Heart left ventricle (tissue), 16 donors: ENCODE measurements at regions of chr1 and their contacts with region 1.

Region 1: DNA sequence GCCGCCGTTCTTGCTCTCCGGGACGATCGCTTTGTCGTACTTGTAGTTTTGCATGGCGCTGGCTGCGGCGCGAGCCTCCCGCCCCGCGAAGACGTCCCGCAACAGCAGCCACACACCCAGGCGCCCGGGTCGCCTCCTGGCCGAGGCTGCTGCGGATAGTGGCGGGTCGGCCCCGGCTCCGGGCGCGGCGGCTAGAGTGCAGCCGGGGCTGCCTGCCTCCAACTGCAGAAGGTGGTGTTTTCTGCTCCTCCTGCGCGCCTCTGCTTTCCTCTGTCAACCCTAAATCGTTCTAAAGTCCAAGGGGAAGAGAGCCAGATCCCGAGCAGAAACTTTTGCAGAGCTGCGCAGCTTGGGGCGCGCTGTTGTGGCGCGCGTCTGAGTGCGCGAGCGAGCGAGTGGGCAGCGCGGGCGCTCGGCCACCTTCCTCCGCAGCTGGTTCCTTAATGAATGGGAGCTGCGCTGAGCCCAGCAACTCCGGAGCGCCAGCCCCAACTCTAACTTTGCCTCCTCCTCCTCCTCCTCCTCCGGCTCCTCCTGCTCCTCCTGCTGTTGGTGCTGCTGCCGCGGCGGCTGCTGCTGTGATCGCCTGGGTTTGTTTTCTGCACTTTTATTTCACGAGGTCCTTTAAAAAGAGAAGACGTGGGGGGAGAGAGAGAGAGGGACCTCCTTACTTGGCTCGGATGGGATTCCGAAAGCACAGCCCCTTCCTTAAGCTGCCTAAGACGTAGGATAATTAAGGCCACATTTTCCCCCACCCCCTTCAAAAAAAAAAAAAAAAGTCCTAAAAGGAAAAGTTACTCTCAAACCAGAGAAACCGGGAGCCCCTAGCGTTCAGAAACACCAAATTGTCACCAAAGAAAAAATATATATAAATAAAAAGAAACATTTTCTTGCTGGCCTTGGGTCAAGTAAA is at the start of gene PLPP3:
- DNase-seq: peak; percentile 87 to 93 (median 91)
- ATAC-seq: peak; percentile 82 to 93 (median 88)
- H3K4me3 ChIP-seq: peak within 1 kb of the TSS; percentile 82 to 99 (median 94)
- H3K27ac ChIP-seq: peak within 1 kb of the TSS; percentile 94 to 99 (median 98)
- H3K4me1 ChIP-seq: peaks cover 0 to 32% (median 11%) of the 10 kb centered on the region in 12 donors
- H3K27me3 ChIP-seq: no peaks in the 10 kb centered on the region
- CTCF ChIP-seq: peak; percentile 27 to 76 (median 52)
- POLR2A ChIP-seq: peak in 1 of 2 donors; percentile 94
- total RNA-seq, gene PLPP3: 75.8 to 221 (median 97.8) TPM

Region 2: GRCh38 chr1:55702064-55702463 is 877.2 kb before region 1 on chr1:
- intact Hi-C with region 1: loop called in 2 of 10 experiments (anchors 5 to 10 kb)
- DNase-seq: no peak
- ATAC-seq: peak in 1 of 4 donors; percentile 51
- H3K4me3 ChIP-seq: no peak overlapping the region
- H3K27ac ChIP-seq: no peak overlapping the region
- H3K4me1 ChIP-seq: peaks cover 0 to 5% (median 0%) of the 10 kb centered on the region in 12 donors
- H3K27me3 ChIP-seq: no peaks in the 10 kb centered on the region
- CTCF ChIP-seq: peak; percentile 35 to 73 (median 60)
- POLR2A ChIP-seq: no peak

Region 3: GRCh38 chr1:56133522-56134472 is 445.4 kb before region 1 on chr1:
- intact Hi-C with region 1: loop called in 1 of 10 experiments (anchors 5 kb)
- DNase-seq: no peak
- ATAC-seq: peak in 1 of 4 donors; percentile 18
- H3K4me3 ChIP-seq: no peak overlapping the region
- H3K27ac ChIP-seq: peak overlapping the region in 1 of 12 donors; percentile 26
- H3K4me1 ChIP-seq: peaks cover 0 to 25% (median 9%) of the 10 kb centered on the region in 12 donors
- H3K27me3 ChIP-seq: no peaks in the 10 kb centered on the region
- CTCF ChIP-seq: no peak
- POLR2A ChIP-seq: no peak

Region 4: GRCh38 chr1:56301847-56302246 is 277.4 kb before region 1 on chr1:
- intact Hi-C with region 1: loop called in 2 of 10 experiments (anchors 2 to 5 kb)
- DNase-seq: no peak
- ATAC-seq: peak in 1 of 4 donors; percentile 21
- H3K4me3 ChIP-seq: no peak overlapping the region
- H3K27ac ChIP-seq: no peak overlapping the region
- H3K4me1 ChIP-seq: peaks cover 0 to 48% (median 22%) of the 10 kb centered on the region in 12 donors
- H3K27me3 ChIP-seq: no peaks in the 10 kb centered on the region
- CTCF ChIP-seq: no peak
- POLR2A ChIP-seq: no peak

Region 5: DNA sequence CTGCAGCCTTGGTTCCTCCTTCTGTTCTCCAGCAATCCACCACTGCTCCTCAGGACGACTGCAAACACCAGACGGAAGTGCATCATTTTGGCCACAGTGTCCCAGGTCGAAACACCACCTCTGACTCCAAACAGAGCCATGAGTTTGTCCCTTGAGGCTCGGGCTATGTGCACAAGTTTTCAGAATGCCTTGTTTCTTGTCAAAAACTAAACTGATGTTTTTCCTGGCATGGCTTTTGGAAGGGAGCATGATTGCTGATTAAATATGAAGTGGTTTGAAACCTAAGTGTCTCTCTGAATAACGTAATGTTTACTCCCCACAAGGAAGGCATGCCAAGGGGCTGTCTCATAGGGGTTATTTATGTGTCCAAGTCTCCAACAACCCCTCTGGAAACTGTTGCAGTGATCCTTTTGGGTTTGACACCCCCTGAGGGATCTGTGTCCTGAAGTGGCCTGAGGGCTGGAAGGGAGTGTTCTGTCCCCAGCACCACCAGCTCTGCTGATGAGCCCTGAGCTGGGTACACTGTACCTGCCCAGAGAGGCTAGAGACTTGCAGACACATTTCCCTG is 132.6 kb before region 1 on chr1:
- intact Hi-C with region 1: loop called in 3 of 10 experiments (anchors 10 kb)
- DNase-seq: peak in 4 of 5 donors; percentile 31 to 81 (median 54)
- ATAC-seq: peak; percentile 86 to 96 (median 92)
- H3K4me3 ChIP-seq: no peak overlapping the region
- H3K27ac ChIP-seq: peak overlapping the region; percentile 20 to 85 (median 70)
- H3K4me1 ChIP-seq: peaks cover 3 to 46% (median 26%) of the 10 kb centered on the region in 12 donors
- H3K27me3 ChIP-seq: no peaks in the 10 kb centered on the region
- CTCF ChIP-seq: no peak
- POLR2A ChIP-seq: peak in 1 of 2 donors; percentile 25

Region 6: DNA sequence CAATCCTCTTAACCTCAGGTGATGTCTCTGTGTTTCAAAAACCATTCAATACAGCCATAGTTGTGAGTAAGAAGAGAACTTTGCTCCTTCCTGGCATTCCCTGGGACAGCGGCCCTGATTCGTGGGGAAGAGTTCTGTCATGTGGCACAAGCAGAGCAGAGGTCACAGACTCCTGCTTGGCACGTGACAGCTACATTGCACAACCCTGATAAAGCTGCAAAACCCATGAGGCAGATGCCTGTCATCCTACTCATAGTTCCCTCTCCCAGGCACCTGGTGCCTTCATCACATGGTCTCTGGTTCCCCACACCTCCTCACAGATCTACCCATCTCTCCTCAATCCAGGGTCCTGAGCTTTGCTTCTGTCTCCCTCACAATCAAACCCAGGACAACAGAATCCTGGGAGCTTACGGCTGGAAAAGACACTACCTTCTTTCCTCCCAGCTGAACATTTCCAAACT is 70.7 kb before region 1 on chr1:
- intact Hi-C with region 1: loop called in 9 of 10 experiments (anchors 2 to 10 kb)
- DNase-seq: peak; percentile 67 to 89 (median 74)
- ATAC-seq: peak; percentile 71 to 88 (median 78)
- H3K4me3 ChIP-seq: no peak overlapping the region
- H3K27ac ChIP-seq: peak overlapping the region; percentile 36 to 84 (median 70)
- H3K4me1 ChIP-seq: peaks cover 7 to 92% (median 83%) of the 10 kb centered on the region in 12 donors
- H3K27me3 ChIP-seq: no peaks in the 10 kb centered on the region
- CTCF ChIP-seq: no peak
- POLR2A ChIP-seq: no peak

Region 7: DNA sequence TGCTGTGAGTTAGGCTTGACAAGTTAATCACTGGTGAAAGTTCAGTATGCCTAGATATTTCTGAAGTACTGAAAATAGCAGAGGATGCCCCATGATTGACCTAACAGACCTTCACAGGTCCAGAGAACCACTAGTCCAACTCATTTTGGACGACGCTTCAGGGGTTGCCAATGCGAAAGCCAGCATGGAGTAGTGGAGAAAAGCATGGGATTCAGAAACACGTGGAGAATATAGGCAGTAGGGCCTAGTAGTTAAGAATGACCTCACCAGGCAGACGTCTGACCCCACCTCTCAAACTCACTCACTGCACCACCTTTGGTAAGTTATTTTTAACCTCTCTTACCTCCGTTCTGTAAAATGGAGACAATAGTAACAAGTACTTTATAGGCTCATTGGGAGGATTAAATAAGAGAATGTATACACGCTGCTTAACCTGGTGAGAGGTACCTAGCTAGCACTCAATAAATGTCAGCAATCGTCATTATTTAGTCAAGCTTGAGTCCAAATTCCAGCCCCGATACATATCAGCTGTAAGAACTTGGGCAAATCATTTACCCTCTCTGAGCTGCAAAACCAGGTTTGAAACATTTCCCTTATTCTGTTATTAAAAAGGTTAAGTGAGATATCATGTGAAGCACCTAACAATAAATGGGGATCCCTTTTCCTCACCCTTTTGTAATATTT is 13.0 kb before region 1 on chr1:
- intact Hi-C with region 1: no loop called
- DNase-seq: no peak
- ATAC-seq: peak in 3 of 4 donors; percentile 12 to 41 (median 23)
- H3K4me3 ChIP-seq: no peak overlapping the region
- H3K27ac ChIP-seq: peak overlapping the region in 11 of 12 donors; percentile 11 to 63 (median 52)
- H3K4me1 ChIP-seq: peaks cover 12 to 97% (median 78%) of the 10 kb centered on the region in 12 donors
- H3K27me3 ChIP-seq: no peaks in the 10 kb centered on the region
- CTCF ChIP-seq: no peak
- POLR2A ChIP-seq: no peak

Region 8: GRCh38 chr1:56617141-56617540 is 37.9 kb after region 1 on chr1:
- intact Hi-C with region 1: no loop called
- DNase-seq: no peak
- ATAC-seq: no peak
- H3K4me3 ChIP-seq: no peak overlapping the region
- H3K27ac ChIP-seq: no peak overlapping the region
- H3K4me1 ChIP-seq: no peaks in the 10 kb centered on the region
- H3K27me3 ChIP-seq: no peaks in the 10 kb centered on the region
- CTCF ChIP-seq: no peak
- POLR2A ChIP-seq: no peak